AG04450 (cell line): ENCODE measurements at regions of chr9 and their contacts with region 1.

Region 1: GRCh38 chr9:129495534-129496325 is 125.2 kb downstream of the C9orf50 start:
- DNase-seq: peak; percentile 64
- H3K4me3 ChIP-seq: peak overlapping the region; percentile 76
- H3K27ac ChIP-seq: peak overlapping the region; percentile 91
- H3K27me3 ChIP-seq: no peaks in the 10 kb centered on the region
- CTCF ChIP-seq: no peak

Region 2: DNA sequence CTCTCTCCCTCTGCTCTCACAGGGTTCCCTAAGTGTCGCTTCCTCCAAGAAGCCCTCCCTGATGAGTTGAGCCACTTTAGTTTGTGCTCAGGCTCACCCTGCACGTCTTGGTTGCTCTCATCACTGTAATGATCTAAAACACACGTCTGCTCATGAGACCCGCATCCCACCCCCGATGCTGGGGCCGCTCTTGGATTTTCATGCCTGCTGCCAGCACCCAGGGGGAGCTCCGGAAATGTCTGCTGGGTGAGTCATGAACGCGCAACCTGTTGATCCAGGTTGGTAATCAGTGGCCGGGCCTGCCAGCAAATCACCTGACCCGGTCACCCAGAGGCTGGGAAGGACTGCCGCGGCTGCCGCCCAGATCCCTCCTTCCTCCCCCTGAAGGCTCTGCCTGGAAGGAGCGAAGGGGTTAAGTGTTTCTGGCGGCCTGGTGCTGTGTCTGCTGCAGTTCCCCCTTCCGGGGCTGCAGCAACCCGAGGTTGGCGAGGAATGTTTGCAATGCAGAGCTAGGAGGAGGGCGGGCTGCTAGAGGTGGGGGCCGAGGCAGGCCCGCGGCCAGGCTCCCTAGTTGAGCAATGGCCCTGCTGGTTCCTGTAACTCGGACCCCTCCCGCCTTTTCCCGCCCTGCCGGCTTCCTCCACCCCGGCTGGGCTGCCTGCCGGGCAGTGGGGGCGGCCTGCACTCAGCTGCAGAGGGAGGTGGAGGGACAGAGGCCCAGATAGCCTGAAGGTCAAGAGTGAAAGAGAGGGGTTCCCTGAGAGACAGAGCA is 161.6 kb before region 1 on chr9:
- CTCF ChIA-PET with region 1: no interaction called
- POLR2A ChIA-PET with region 1: interaction called, 12 read pairs
- DNase-seq: peak; percentile 87
- H3K4me3 ChIP-seq: peak overlapping the region; percentile 12; the same call in 1 of the 2 replicates
- H3K27ac ChIP-seq: peak overlapping the region; percentile 86
- H3K27me3 ChIP-seq: no peaks in the 10 kb centered on the region
- CTCF ChIP-seq: 0 out of 2 replicates have a peak, but pooled peaks have one; percentile 2

Region 3: DNA sequence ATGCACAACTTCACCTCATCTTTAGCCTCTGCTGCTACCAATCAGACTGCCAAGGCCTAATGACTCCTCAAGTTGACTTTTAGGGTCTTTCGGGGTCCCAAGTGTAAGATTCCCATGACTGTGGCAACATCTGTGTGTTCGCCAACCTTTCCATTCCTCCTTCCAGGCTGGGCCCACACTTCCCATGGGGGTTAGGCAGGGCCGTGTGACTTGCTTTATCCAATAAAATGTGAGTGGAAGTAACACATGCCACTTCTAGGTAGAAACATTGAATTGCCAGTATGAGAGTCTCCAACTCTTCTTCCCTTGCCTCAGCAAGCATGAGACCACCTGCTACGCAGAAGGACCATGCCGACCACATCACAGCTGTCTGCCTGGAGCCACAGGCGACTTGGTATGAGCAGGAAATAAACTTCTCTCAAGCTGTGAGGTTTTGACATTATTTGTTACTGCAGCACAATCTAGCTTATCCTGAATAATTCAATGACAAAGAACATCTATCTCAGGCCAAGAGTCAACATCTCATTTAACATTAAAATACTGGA is 127.2 kb before region 1 on chr9:
- CTCF ChIA-PET with region 1: no interaction called
- POLR2A ChIA-PET with region 1: no interaction called
- DNase-seq: no peak
- H3K4me3 ChIP-seq: no peak overlapping the region
- H3K27ac ChIP-seq: no peak overlapping the region
- H3K27me3 ChIP-seq: no peaks in the 10 kb centered on the region
- CTCF ChIP-seq: no peak

Region 4: DNA sequence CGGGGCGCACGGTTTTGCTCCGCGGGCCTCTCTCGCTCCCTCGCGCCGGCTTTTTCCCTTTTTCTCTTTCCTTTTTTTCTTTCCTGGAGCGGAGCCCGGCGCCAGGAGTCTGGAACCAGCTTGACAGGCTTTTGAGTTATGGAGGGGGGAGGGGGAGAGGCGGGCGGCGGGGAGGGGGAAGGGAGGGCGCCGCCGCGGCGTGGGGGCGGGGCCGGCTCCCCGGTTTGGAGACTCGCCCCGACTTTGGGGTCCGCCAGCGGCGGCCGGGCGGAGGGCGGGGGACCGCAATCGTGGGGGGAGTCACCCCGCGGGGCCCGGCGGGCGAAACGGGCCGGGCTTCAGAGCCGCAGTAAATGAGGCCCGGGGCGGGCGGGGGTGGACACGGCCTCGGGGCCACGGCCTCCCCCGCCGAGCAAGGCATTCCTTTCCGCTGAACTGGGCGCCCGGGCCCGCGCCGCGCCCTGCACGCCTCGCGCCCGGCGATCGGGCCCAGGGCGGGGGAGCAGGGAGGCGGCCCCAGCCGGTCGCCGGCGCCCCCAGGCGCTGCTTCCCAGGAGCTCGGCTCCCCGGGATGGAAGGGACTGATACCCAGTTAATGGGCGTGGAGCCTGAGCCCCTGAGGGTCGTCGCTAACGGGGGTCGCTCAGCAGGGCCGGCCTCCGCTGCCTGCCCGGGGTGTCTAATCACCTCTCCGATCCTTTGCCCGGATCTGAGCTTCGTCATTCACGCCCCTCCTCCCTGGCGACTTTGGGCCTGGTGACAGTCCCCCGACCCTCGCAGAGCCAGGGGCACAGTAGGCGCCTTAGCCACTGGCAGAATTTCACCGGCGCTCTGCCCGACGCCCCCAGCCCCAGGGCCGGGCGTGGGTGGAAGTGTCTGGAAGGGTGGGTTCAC is 13.0 kb before region 1 on chr9:
- CTCF ChIA-PET with region 1: no interaction called
- POLR2A ChIA-PET with region 1: interaction called, 23 read pairs
- DNase-seq: no peak
- H3K4me3 ChIP-seq: peak overlapping the region; percentile 44
- H3K27ac ChIP-seq: peak overlapping the region; percentile 100
- H3K27me3 ChIP-seq: no peaks in the 10 kb centered on the region
- CTCF ChIP-seq: no peak

Region 5: GRCh38 chr9:129509522-129510270 is 14.0 kb after region 1 on chr9:
- CTCF ChIA-PET with region 1: interaction called, 4 read pairs
- POLR2A ChIA-PET with region 1: interaction called, 18 read pairs
- DNase-seq: peak; percentile 91
- H3K4me3 ChIP-seq: no peak overlapping the region
- H3K27ac ChIP-seq: peak overlapping the region; percentile 70
- H3K27me3 ChIP-seq: no peaks in the 10 kb centered on the region
- CTCF ChIP-seq: no peak

Region 6: DNA sequence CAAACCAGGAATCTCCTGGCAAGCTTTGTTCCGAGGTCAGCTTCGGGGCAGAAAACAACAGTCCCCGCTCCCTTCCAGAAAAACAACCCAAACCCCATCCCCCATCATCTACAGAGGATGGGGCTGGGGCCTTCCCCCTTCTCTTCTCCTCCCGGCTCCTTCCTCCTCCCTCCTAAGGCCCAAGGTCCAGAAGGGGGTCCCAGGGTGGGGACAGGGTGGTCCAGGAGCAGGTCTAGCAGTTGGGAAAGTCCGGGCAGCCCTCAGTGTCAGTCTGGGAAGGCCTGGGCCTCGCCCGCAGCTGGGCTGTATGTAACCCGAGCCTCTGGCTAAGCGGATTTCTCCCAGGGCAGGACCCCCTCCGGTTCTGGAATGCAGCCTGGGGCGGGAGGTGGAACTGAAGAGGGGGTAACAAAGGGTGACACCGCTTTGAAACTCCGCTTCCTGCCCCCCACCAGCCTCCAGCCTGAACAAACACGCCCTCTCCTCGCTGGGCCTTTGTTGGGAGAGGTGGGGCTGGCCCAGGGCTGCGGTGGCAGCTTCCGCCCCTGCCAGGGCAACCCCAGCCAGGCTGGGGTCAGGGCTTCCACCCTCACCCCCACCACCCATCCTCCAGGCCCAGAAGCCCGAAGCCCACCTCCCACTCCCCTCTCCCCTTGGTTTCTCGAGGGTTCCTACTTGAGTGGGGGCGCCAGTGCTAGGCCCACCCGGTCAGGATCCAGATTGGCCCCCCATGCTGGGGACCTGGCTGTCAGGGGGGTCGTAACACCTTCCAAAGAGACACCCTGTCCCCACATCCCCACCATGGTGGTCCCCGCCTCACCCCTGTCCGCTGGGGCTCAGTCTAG is 61.7 kb after region 1 on chr9:
- CTCF ChIA-PET with region 1: no interaction called
- POLR2A ChIA-PET with region 1: interaction called, 13 read pairs
- DNase-seq: no peak
- H3K4me3 ChIP-seq: no peak overlapping the region
- H3K27ac ChIP-seq: peak overlapping the region; percentile 73
- H3K27me3 ChIP-seq: no peaks in the 10 kb centered on the region
- CTCF ChIP-seq: no peak

Region 7: GRCh38 chr9:129569502-129570449 is 74.0 kb after region 1 on chr9:
- CTCF ChIA-PET with region 1: no interaction called
- POLR2A ChIA-PET with region 1: interaction called, 24 read pairs
- DNase-seq: no peak
- H3K4me3 ChIP-seq: no peak overlapping the region
- H3K27ac ChIP-seq: peak overlapping the region; percentile 92
- H3K27me3 ChIP-seq: no peaks in the 10 kb centered on the region
- CTCF ChIP-seq: peak; percentile 49

Region 8: GRCh38 chr9:129597355-129598088 is 101.8 kb after region 1 on chr9:
- CTCF ChIA-PET with region 1: no interaction called
- POLR2A ChIA-PET with region 1: interaction called, 36 read pairs
- DNase-seq: no peak
- H3K4me3 ChIP-seq: peak overlapping the region; percentile 59
- H3K27ac ChIP-seq: peak overlapping the region; percentile 77
- H3K27me3 ChIP-seq: no peaks in the 10 kb centered on the region
- CTCF ChIP-seq: no peak